ENCODE measurements at regions of chr18 and their contacts with region 1.

Region 1: DNA sequence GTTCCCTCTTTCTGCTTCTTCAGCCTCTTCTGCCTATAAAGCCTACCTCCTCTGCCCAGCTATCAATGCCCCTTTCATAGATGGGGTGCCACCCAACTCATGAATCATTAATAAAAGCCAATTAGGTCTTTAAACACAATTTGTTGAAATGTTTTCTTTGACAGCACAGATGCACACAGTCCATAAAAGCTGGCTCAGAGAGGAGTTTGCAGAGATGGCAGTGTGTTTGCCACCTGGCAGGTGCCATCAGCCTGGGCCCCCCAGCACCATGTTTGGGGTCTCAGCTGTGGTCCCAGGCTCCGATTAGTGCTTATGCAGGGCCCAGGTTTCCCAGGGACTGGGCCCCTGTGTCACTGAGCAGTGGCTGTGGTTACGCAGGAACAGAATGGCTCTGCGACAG is 7.9 kb upstream of the MC2R start:
- DNase-seq: no peak
- H3K4me3 ChIP-seq: no peak overlapping the region
- H3K27ac ChIP-seq: no peak overlapping the region
- H3K4me1 ChIP-seq: no peaks in the 10 kb centered on the region
- H3K27me3 ChIP-seq: no peaks in the 10 kb centered on the region
- CTCF ChIP-seq: no peak
- EP300 ChIP-seq: no peak
- POLR2A ChIP-seq: no peak

Region 2: GRCh38 chr18:13217466-13217961 is 705.7 kb before region 1 on chr18:
- intact Hi-C with region 1: no loop called
- DNase-seq: peak in 4 of 5 donors; percentile 43 to 59 (median 50)
- H3K4me3 ChIP-seq: peak overlapping the region; percentile 66
- H3K27ac ChIP-seq: peak overlapping the region in 1 of 2 donors; percentile 44
- H3K4me1 ChIP-seq: peaks cover 6% of the 10 kb centered on the region
- H3K27me3 ChIP-seq: no peaks in the 10 kb centered on the region
- CTCF ChIP-seq: no peak
- EP300 ChIP-seq: no peak
- POLR2A ChIP-seq: no peak

Region 3: DNA sequence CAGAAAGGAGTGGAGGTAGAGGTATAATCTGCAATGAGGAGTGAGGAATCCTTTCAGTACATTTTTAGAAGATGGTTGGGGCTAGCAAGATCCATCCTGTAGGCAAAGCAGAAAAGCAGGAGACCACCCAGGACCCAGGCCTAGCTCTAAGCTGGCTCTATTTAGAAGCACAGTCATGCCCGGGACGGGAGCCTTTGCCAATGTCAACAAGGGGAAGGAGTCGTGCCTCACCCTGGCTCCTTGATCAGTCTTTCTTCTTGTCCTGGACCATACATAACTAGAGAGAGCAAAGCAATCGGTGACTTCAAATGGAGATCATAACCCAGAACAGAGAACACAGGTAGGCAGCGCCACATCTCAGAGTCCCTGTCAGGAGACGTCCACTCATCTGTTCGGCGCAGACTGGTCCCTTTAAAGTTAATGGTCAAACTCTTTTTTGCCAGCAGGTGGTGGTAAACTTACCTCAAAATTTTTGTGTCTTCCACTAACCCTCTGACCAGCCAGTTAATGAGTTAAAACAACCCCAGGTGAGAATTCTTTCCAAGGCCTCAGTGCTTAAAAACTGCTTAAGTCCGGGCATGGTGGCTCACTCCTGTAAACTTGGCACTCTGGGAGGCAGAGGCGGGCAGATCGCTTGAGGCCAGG is 91.2 kb before region 1 on chr18:
- intact Hi-C with region 1: no loop called
- DNase-seq: no peak
- H3K4me3 ChIP-seq: no peak overlapping the region
- H3K27ac ChIP-seq: no peak overlapping the region
- H3K4me1 ChIP-seq: no peaks in the 10 kb centered on the region
- H3K27me3 ChIP-seq: no peaks in the 10 kb centered on the region
- CTCF ChIP-seq: no peak
- EP300 ChIP-seq: no peak
- POLR2A ChIP-seq: no peak

Region 4: DNA sequence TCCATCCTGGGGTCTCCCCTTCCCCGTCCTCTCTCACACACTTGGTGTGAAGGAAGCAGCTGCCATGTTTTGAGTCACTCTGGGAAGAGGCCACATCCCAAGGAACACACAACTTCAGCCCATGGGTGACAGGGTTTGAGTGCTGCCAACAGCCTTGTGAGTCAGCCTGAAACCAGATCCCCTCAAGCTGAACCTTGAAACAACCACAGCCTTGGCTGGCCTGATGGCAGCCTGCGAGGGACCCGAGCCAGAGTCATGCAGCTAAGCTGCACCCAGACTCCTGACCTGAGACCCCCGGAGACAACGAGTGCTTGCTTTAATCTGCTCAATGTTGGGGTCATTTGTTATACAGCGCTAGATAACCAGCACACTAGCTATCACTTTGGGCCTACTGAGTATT is 11.5 kb after region 1 on chr18:
- intact Hi-C with region 1: loop called in 1 of 4 experiments (anchors 2 kb)
- DNase-seq: no peak
- H3K4me3 ChIP-seq: no peak overlapping the region
- H3K27ac ChIP-seq: no peak overlapping the region
- H3K4me1 ChIP-seq: no peaks in the 10 kb centered on the region
- H3K27me3 ChIP-seq: no peaks in the 10 kb centered on the region
- CTCF ChIP-seq: no peak
- EP300 ChIP-seq: no peak
- POLR2A ChIP-seq: no peak